Naive thymus-derived CD8-positive, alpha-beta T cell (primary cell): ENCODE measurements at regions of chr19 and their contacts with region 1.

Region 1: GRCh38 chr19:10194500-10195289 is at the start of gene DNMT1:
- DNase-seq: peak; percentile 85 to 98 (median 93)
- ATAC-seq: peak; percentile 95
- H3K4me3 Mint-ChIP-seq: peak within 1 kb of the TSS; percentile 88 to 97 (median 94)
- H3K27ac Mint-ChIP-seq: peak within 1 kb of the TSS; percentile 67 to 95 (median 91)
- H3K4me1 Mint-ChIP-seq: peaks cover 7 to 45% (median 35%) of the 10 kb centered on the region in 4 donors
- H3K27me3 Mint-ChIP-seq: no peaks in the 10 kb centered on the region
- polyA plus RNA-seq, gene DNMT1: 93.7 to 146 (median 142) TPM

Region 2: DNA sequence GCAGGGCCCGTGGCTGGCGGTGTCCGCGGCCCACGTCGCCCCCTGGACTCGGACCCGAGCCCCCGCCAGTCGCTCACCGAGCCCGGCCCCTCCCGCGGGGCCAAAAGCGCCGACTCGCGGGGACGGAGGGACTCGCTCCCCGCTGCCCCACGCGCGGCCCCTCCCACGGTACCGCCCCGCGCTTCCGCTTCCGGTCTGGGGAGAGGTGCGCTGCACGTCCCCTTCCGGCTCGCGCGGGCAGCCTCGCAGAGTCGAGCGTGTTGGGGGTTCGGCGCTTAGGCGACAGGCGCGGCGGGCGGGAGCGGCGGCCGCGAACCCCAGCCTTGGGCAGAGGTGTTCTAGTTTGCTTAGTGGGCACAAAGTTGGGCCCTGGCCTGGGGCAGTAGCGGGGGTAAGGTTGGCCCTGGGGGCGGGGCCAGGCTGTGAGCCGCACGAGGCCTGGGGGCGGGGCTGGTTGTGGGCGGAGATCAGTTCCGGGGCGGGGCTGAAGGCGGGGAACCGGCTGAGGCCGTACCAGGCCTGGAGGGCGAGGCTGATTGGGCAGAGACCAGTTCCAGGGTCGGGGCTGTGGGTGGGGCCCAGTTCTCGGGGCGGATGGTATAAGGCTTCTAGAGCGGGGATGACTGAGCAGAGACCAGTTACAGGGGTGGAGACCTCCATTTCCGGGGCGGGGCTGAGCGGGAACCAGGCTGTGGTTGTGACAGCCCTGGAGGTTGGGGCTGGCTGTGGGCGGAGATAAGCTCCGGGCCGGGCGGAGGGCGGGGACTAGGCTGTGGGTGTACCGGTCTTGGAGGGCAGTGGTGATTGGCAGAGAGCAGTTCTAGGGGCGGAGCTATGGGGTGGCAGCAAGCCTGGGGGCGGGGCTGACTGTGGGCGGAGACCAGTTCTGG is 1362.3 kb before region 1 on chr19 and contains the starts of genes MBD3L1 and ZNF558:
- POLR2A ChIA-PET with region 1: interaction called, 10 read pairs
- DNase-seq: peak; percentile 97 to 100 (median 100)
- ATAC-seq: peak; percentile 89 to 90
- H3K4me3 Mint-ChIP-seq: peak within 1 kb of the TSS; percentile 79 to 96 (median 90)
- H3K27ac Mint-ChIP-seq: peak within 1 kb of the TSS; percentile 91 to 98 (median 97)
- H3K4me1 Mint-ChIP-seq: peaks cover 10 to 34% (median 28%) of the 10 kb centered on the region in 4 donors
- H3K27me3 Mint-ChIP-seq: no peaks in the 10 kb centered on the region
- polyA plus RNA-seq, gene MBD3L1: not detected
- polyA plus RNA-seq, gene ZNF558: 3.9 to 10.6 (median 6.0) TPM

Region 3: GRCh38 chr19:9834726-9835506 is 359.8 kb before region 1 on chr19 and contains the start of gene PIN1:
- POLR2A ChIA-PET with region 1: no interaction called
- DNase-seq: peak; percentile 97 to 100 (median 99)
- ATAC-seq: peak; percentile 96
- H3K4me3 Mint-ChIP-seq: peak within 1 kb of the TSS; percentile 89 to 97 (median 94)
- H3K27ac Mint-ChIP-seq: peak within 1 kb of the TSS; percentile 77 to 98 (median 94)
- H3K4me1 Mint-ChIP-seq: peaks cover 7 to 30% (median 14%) of the 10 kb centered on the region in 4 donors
- H3K27me3 Mint-ChIP-seq: no peaks in the 10 kb centered on the region
- polyA plus RNA-seq, gene PIN1: 85.3 to 126 (median 95.8) TPM